ENCODE measurements at regions of chr3 and their contacts with region 1.

Region 1: DNA sequence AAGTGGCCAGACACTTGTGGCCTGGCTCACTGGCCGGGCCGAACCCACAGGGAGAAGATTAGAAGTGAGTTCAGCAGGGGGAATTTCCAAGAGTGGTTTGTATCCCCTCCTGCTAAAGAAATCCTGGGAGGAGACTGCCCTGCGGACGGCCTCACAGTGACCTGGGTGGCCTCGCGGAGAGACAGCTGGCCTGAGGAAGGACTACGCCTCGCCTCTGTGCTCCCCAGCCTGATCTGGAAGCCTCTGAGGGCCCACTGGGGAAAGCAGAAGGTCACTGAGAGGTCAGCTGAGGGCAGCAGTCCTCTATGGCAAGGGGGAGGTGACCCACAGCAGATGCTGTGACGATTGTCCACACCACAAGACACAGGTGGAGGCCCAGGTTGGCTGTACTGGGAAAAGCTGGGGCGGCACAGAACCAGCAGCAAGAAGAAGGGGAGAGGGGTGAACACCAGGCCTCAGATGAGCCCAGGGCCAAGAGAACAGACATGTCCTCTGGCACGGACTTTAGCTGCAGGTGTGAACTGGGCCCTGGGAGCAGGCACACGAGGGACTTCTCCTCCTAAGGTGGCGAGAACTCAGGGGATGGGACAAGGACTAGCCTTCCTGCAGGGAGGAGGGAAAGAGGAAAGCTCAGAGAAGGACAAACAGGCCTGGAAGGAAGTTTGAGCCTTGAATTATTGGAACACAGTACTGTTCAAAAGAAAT is 37.2 kb upstream of the DLG1 start:
- DNase-seq: no peak
- H3K4me3 ChIP-seq: no peak overlapping the region
- H3K27ac ChIP-seq: peak overlapping the region in 27 of 59 donors; percentile 2 to 71 (median 35)
- H3K27me3 ChIP-seq: peaks cover 0 to 2% (median 0%) of the 10 kb centered on the region in 45 donors
- CTCF ChIP-seq: no peak

Region 2: GRCh38 chr3:197352382-197352781 is 16.8 kb after region 1 on chr3:
- intact Hi-C with region 1: loop called in 1 of 2 experiments (anchors 2 kb)
- DNase-seq: no peak
- H3K4me3 ChIP-seq: no peak overlapping the region
- H3K27ac ChIP-seq: peak overlapping the region in 6 of 59 donors; percentile 7 to 89 (median 24)
- H3K27me3 ChIP-seq: no peaks in the 10 kb centered on the region
- CTCF ChIP-seq: no peak

Region 3: GRCh38 chr3:197564097-197564843 is 228.7 kb after region 1 on chr3:
- intact Hi-C with region 1: no loop called
- DNase-seq: no peak
- H3K4me3 ChIP-seq: no peak overlapping the region
- H3K27ac ChIP-seq: no peak overlapping the region
- H3K27me3 ChIP-seq: no peaks in the 10 kb centered on the region
- CTCF ChIP-seq: no peak